Esophagus muscularis mucosa (tissue), 4 donors: ENCODE measurements at regions of chr11 and their contacts with region 1.

Region 1: DNA sequence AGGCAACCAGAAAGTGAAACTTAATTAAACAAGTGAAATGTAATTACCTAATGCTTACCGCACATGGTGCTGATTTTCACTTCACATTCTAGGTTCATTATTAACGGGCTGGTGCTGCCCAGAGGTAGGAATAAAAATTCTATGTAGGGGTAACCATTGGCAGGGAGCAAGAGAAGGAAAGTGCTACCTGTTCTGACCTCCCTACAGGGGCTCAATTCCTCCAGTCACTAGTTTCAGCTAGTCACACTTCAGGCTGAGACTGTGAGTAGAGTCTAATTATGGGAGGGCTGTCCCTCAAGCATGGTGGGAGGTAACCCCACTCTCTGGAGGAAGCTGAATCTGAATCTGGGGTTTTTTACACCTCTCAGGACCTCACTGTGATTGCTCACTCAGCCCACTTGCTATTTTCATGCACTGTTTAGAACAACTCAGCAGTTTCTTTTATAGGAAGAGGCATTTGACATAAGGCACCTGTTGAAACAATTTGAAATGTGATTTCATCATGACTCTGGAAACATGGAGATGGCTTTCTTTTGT is 75.4 kb downstream of the MAML2 start:
- DNase-seq: no peak
- H3K4me3 ChIP-seq: no peak overlapping the region
- H3K27ac ChIP-seq: peak overlapping the region in 3 of 4 donors; percentile 34 to 45 (median 42)
- H3K4me1 ChIP-seq: peaks cover 24 to 50% (median 38%) of the 10 kb centered on the region in 4 donors
- H3K27me3 ChIP-seq: no peaks in the 10 kb centered on the region
- CTCF ChIP-seq: no peak
- EP300 ChIP-seq: no peak
- POLR2A ChIP-seq: no peak

Region 2: GRCh38 chr11:96331699-96332116 is 64.1 kb after region 1 on chr11:
- intact Hi-C with region 1: loop called (anchors 5 kb)
- DNase-seq: no peak
- H3K4me3 ChIP-seq: no peak overlapping the region
- H3K27ac ChIP-seq: peak overlapping the region in 1 of 4 donors; percentile 24
- H3K4me1 ChIP-seq: peaks cover 10 to 56% (median 44%) of the 10 kb centered on the region in 4 donors
- H3K27me3 ChIP-seq: no peaks in the 10 kb centered on the region
- CTCF ChIP-seq: no peak
- EP300 ChIP-seq: no peak
- POLR2A ChIP-seq: no peak

Region 3: DNA sequence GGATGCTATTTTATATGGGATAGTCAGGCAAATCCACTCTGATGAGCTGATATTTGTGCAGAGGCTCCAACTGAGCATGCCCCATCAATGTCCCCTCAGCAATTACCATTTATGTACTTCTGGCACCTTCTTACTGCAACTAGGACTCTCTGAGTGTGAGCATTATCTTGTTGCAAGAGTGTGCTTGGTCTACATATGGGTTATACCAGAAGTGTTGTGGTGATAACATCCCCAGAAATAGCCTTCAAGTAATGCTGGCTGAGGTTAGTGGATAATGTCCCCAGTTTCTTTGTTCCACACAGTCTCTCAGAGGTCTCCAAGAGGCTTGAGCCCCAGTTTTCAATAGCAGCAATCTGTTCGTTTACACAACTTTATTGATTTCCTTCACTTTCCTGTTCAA is 530.9 kb after region 1 on chr11:
- intact Hi-C with region 1: no loop called
- DNase-seq: no peak
- H3K4me3 ChIP-seq: no peak overlapping the region
- H3K27ac ChIP-seq: no peak overlapping the region
- H3K4me1 ChIP-seq: no peaks in the 10 kb centered on the region
- H3K27me3 ChIP-seq: no peaks in the 10 kb centered on the region
- CTCF ChIP-seq: no peak
- EP300 ChIP-seq: no peak
- POLR2A ChIP-seq: no peak